WTC11 (cell line): ENCODE measurements at regions of chr17 and their contacts with region 1.

Region 1: DNA sequence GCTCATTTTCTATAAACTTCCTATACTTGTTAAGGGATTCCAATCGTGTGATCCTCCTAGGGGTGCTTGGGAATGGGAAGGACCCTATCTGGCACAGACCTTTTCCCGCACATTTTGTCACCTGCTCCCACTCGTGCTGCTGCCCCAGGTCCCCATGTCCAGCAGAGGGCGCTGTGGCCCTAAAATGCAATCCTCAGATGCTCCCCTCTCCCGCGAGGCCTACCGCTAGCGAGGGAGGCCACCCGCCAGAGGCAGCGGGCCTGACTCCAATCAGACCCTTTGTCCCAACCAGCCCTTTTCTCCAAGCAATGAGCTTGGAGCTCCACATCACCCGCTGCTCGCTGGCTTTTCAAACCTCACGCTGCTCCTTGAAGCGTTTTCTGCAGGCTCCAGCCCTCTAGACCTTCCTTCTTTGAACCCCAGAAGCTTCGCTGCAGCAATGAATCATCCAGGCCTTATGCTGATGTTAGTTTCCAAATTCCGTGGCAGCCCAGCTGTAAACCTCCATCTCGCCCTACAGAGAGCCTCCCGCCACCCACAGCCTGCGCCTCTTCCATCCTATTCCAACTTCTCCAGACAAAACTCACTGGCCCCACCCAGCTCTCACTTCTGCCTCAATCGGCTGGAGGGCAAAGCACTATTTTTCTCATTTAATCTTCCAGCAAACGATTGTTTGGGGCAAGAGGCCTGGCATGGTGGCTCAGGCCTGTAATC is 23.6 kb upstream of the FZD2 start:
- DNase-seq: peak; percentile 97
- ATAC-seq: peak; percentile 88
- H3K4me3 Mint-ChIP-seq: no peak overlapping the region
- H3K27ac Mint-ChIP-seq: peak overlapping the region; percentile 25; the same call in 1 of the 2 replicates
- H3K4me1 Mint-ChIP-seq: peaks cover 31% of the 10 kb centered on the region
- H3K27me3 Mint-ChIP-seq: peaks cover 41% of the 10 kb centered on the region
- CTCF ChIP-seq: peak; percentile 96

Region 2: GRCh38 chr17:44518032-44518431 is 15.7 kb before region 1 on chr17:
- CTCF ChIA-PET with region 1: interaction called, 32 read pairs
- POLR2A ChIA-PET with region 1: no interaction called
- DNase-seq: no peak
- ATAC-seq: no peak
- H3K4me3 Mint-ChIP-seq: no peak overlapping the region
- H3K27ac Mint-ChIP-seq: no peak overlapping the region
- H3K4me1 Mint-ChIP-seq: no peaks in the 10 kb centered on the region
- H3K27me3 Mint-ChIP-seq: no peaks in the 10 kb centered on the region; the same call in 1 of the 2 replicates
- CTCF ChIP-seq: no peak

Region 3: DNA sequence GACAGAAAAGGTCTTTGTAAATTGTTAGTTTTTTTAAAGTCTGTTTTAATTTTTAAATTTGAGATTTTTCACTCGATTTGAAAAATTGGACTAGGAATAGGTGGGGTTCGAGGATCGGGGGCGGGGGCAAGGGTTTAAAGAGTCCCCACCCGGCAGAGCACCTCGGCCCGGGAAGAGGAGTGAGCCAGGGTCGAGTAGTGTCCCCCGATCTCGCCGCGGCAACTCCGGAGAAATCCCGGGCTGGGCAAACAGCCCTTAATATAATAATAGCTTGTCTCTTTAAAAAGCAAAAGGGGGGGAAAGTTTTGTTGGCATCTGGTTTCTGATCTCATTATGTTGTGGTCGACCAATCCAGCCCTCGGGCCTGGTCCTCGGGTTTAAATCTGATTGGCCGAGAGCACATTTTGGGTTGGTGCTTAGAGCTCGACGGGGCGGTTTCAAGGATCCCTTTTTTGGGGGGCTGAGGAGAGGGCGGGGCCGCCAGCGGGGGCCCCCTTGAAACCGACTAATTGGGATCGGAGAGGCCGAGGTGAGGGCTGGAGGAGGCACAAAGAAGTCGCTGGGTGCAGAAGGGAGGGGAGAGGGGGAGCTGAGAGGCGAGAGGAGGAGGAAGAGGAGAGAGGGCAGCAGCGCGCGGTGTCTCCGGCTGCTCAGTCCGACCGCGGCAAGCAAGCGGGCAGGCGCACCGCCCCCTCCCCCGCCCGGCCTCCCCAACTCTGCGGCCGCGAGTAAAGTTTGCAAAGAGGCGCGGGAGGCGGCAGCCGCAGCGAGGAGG is 23.3 kb after region 1 on chr17 and contains the start of gene FZD2:
- CTCF ChIA-PET with region 1: interaction called, 65 read pairs
- POLR2A ChIA-PET with region 1: interaction called, 19 read pairs
- DNase-seq: peak; percentile 91
- ATAC-seq: peak; percentile 77
- H3K4me3 Mint-ChIP-seq: peak within 1 kb of the TSS; percentile 94
- H3K27ac Mint-ChIP-seq: peak within 1 kb of the TSS; percentile 100
- H3K4me1 Mint-ChIP-seq: peaks cover 54% of the 10 kb centered on the region
- H3K27me3 Mint-ChIP-seq: peaks cover 49% of the 10 kb centered on the region
- CTCF ChIP-seq: no peak
- total RNA-seq, gene FZD2: 37.6 to 42.8 TPM (median 38.5 TPM) in 3 replicates

Region 4: DNA sequence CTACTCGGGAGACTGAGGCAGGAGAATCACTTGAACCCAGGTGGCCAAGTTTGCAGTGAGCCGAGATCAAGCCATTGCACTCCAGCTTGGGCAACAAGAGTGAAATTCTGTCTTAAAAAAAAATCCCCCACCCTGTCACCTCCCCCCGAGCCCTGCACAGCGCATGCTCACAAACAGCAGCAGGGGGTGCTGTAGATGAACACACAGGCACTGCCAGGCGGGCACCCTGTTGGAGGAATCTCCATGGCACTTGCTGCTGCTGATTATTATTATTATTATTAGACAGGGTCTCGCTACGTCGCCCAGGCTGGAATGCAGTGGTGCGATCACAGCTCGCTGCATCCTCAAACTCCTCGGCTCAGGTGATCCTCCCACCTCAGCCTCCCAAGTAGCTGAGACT is 48.2 kb after region 1 on chr17:
- CTCF ChIA-PET with region 1: interaction called, 13 read pairs
- POLR2A ChIA-PET with region 1: no interaction called
- DNase-seq: no peak
- ATAC-seq: peak; percentile 44
- H3K4me3 Mint-ChIP-seq: no peak overlapping the region
- H3K27ac Mint-ChIP-seq: no peak overlapping the region
- H3K4me1 Mint-ChIP-seq: peaks cover 16% of the 10 kb centered on the region
- H3K27me3 Mint-ChIP-seq: peaks cover 14% of the 10 kb centered on the region
- CTCF ChIP-seq: no peak

Region 5: DNA sequence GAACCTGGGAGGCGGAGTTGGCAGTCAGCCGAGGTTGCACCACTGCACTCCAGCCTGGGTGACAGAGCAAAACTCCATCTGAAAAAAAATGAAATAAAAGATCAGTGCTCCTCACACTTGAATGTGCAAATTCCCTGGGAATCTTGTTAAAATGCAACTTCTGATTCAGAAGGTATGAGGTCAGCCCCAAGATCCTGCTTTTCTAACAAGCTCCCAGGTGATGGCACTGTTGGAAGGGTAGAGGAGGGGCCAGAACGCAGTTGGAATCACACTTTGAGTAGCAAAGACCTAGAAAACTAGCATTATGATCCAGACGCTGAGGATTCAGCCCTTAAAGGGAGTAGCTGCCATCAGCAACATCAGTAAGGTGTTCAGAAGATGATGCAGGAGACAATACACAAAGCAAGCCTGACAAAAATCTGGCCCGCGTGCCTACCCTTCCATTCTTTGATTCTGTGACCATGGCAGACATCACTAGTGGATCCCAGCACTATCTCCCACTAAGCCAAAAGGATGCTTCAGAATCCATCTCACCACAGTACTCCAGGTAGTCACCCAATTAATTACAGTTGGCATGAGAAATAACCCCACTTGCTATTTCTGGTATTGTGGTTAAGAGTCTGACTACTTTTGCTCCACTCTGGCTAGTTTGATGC is 89.5 kb after region 1 on chr17:
- CTCF ChIA-PET with region 1: interaction called, 20 read pairs
- POLR2A ChIA-PET with region 1: interaction called, 3 read pairs
- DNase-seq: no peak
- ATAC-seq: peak; percentile 78
- H3K4me3 Mint-ChIP-seq: no peak overlapping the region; the same call in 1 of the 2 replicates
- H3K27ac Mint-ChIP-seq: no peak overlapping the region
- H3K4me1 Mint-ChIP-seq: peaks cover 12% of the 10 kb centered on the region
- H3K27me3 Mint-ChIP-seq: no peaks in the 10 kb centered on the region; the same call in 1 of the 2 replicates
- CTCF ChIP-seq: no peak

Region 6: DNA sequence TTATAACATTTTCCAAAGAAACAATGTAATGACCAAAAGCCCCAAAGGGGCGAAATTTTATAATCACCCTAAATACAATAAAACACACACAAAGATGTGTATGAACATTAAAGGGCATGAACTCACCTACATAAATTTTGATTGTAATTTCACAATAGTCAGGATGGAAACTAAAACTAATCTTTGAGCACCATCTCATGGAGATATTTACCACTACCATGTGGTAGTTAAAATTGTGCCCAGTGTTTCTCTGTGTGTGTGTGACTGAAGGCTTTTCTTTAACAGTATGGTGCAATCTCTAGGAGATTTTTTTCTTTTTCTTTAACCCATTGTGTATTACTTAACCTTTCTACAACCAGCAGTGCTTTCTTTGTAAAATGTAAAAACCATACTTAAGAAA is 102.9 kb after region 1 on chr17:
- CTCF ChIA-PET with region 1: interaction called, 17 read pairs
- POLR2A ChIA-PET with region 1: no interaction called
- DNase-seq: no peak
- ATAC-seq: no peak
- H3K4me3 Mint-ChIP-seq: no peak overlapping the region
- H3K27ac Mint-ChIP-seq: no peak overlapping the region
- H3K4me1 Mint-ChIP-seq: peaks cover 6% of the 10 kb centered on the region
- H3K27me3 Mint-ChIP-seq: peaks cover 5% of the 10 kb centered on the region; the same call in 1 of the 2 replicates
- CTCF ChIP-seq: no peak

Region 7: DNA sequence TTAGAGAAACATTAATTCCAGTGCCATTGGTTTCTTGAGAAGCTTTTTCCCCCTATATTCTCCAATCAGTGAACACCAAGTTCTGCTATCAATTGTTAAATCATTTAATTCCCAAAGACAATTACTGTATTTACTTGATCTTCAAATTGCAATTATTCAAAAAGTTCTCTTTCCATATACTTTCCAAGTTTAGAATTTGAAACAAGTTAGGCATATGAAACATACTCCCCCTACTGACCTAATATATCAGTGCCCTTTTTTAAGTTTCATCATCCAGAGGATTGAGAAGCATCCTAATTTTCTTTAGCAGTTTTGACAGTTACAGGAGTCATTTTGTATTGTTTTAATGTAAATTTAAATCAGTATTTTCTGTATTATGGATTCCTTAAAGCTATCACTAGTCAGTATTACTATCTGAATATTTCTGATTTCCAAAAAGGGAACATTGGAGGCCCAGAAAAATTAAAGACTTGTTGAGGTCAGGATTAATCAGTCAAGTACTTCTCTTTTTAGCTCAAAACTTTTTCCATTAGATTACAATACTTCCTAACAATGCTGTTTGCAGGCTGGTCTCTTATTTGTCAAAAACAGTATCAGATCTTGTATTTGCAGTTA is 138.9 kb after region 1 on chr17:
- CTCF ChIA-PET with region 1: interaction called, 15 read pairs
- POLR2A ChIA-PET with region 1: no interaction called
- DNase-seq: no peak
- ATAC-seq: no peak
- H3K4me3 Mint-ChIP-seq: no peak overlapping the region
- H3K27ac Mint-ChIP-seq: no peak overlapping the region
- H3K4me1 Mint-ChIP-seq: no peaks in the 10 kb centered on the region
- H3K27me3 Mint-ChIP-seq: no peaks in the 10 kb centered on the region
- CTCF ChIP-seq: peak; percentile 35